Mammary epithelial cell (primary cell): ENCODE measurements at regions of chr13 and their contacts with region 1.

Region 1: GRCh38 chr13:36858290-36858689 is 39.3 kb downstream of the RFXAP start:
- DNase-seq: peak; percentile 25
- H3K4me3 ChIP-seq: no peak overlapping the region
- H3K27ac ChIP-seq: no peak overlapping the region
- H3K4me1 ChIP-seq: no peaks in the 10 kb centered on the region
- H3K27me3 ChIP-seq: no peaks in the 10 kb centered on the region
- CTCF ChIP-seq: peak; percentile 29 to 63

Region 2: GRCh38 chr13:35478271-35479037 is 1379.8 kb before region 1 on chr13:
- CTCF ChIA-PET with region 1: no interaction called
- dilution Hi-C with region 1: no loop called
- in situ Hi-C with region 1: no loop called
- intact Hi-C with region 1: no loop called
- DNase-seq: no peak
- H3K4me3 ChIP-seq: no peak overlapping the region
- H3K27ac ChIP-seq: no peak overlapping the region
- H3K4me1 ChIP-seq: no peaks in the 10 kb centered on the region
- H3K27me3 ChIP-seq: no peaks in the 10 kb centered on the region
- CTCF ChIP-seq: no peak

Region 3: GRCh38 chr13:36453516-36453915 is 404.8 kb before region 1 on chr13:
- CTCF ChIA-PET with region 1: no interaction called
- dilution Hi-C with region 1: no loop called
- in situ Hi-C with region 1: no loop called
- intact Hi-C with region 1: loop called (anchors 10 kb)
- DNase-seq: no peak
- H3K4me3 ChIP-seq: no peak overlapping the region
- H3K27ac ChIP-seq: no peak overlapping the region
- H3K4me1 ChIP-seq: peaks cover 11% of the 10 kb centered on the region
- H3K27me3 ChIP-seq: no peaks in the 10 kb centered on the region
- CTCF ChIP-seq: peak; percentile 14 to 48

Region 4: GRCh38 chr13:36965773-36966172 is 107.5 kb after region 1 on chr13:
- CTCF ChIA-PET with region 1: no interaction called
- dilution Hi-C with region 1: no loop called
- in situ Hi-C with region 1: no loop called
- intact Hi-C with region 1: loop called (anchors 5 kb)
- DNase-seq: peak; percentile 88
- H3K4me3 ChIP-seq: peak overlapping the region in 1 of 3 experiments; percentile 4
- H3K27ac ChIP-seq: peak overlapping the region; percentile 69
- H3K4me1 ChIP-seq: peaks cover 18% of the 10 kb centered on the region
- H3K27me3 ChIP-seq: no peaks in the 10 kb centered on the region
- CTCF ChIP-seq: no peak

Region 5: GRCh38 chr13:36981156-36981743 is 123.0 kb after region 1 on chr13:
- CTCF ChIA-PET with region 1: interaction called, 5 read pairs
- dilution Hi-C with region 1: no loop called
- in situ Hi-C with region 1: loop called in 1 of 2 experiments (anchors 10 kb)
- intact Hi-C with region 1: loop called (anchors 1 kb)
- DNase-seq: peak; percentile 11
- H3K4me3 ChIP-seq: no peak overlapping the region
- H3K27ac ChIP-seq: no peak overlapping the region
- H3K4me1 ChIP-seq: peaks cover 4% of the 10 kb centered on the region
- H3K27me3 ChIP-seq: no peaks in the 10 kb centered on the region
- CTCF ChIP-seq: peak; percentile 44 to 49

Region 6: DNA sequence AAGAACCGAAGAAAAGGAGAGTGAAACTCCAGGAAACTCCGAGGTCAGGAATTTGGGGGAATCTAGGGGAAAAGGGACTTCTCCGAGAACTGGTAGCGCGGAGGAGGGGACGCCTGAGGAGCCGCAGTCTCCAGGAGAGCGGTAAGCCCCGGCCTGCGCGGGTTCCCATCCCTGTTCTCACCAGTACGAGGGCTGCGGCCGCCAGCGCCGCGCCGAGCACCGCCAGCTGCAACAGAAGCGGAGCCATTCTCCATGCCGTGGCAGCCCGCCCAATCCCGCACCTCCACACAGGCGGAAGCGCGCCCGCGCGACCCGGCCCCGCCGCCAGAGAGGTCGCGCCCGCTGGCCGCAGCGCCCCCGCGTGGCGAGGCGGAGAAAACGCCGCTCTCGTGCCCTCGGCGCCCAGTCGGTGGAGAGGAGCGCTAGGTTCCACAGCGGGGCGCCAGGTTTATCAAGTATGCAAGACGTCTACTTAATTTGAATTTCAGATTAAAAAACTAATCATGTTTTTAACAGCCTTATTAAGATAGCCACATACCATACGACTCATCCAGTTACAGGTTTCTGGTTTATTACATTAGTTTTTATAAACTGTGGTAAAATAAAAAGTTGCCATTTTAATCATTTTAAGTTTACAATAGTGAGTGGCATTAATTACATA is 140.9 kb after region 1 on chr13 and contains the start of gene ALG5:
- CTCF ChIA-PET with region 1: no interaction called
- dilution Hi-C with region 1: no loop called
- in situ Hi-C with region 1: no loop called
- intact Hi-C with region 1: loop called (anchors 5 kb)
- DNase-seq: peak; percentile 83
- H3K4me3 ChIP-seq: peak within 1 kb of the TSS; percentile 76 to 93 (median 90)
- H3K27ac ChIP-seq: peak within 1 kb of the TSS; percentile 97
- H3K4me1 ChIP-seq: peaks cover 7% of the 10 kb centered on the region
- H3K27me3 ChIP-seq: no peaks in the 10 kb centered on the region
- CTCF ChIP-seq: peak; percentile 70 to 82
- total RNA-seq, gene ALG5: 27.7 to 37.5 TPM

Region 7: GRCh38 chr13:37068962-37069361 is 210.7 kb after region 1 on chr13:
- CTCF ChIA-PET with region 1: no interaction called
- dilution Hi-C with region 1: no loop called
- in situ Hi-C with region 1: no loop called
- intact Hi-C with region 1: loop called (anchors 2 kb)
- DNase-seq: no peak
- H3K4me3 ChIP-seq: no peak overlapping the region
- H3K27ac ChIP-seq: no peak overlapping the region
- H3K4me1 ChIP-seq: no peaks in the 10 kb centered on the region
- H3K27me3 ChIP-seq: no peaks in the 10 kb centered on the region
- CTCF ChIP-seq: peak; percentile 18 to 31

Region 8: DNA sequence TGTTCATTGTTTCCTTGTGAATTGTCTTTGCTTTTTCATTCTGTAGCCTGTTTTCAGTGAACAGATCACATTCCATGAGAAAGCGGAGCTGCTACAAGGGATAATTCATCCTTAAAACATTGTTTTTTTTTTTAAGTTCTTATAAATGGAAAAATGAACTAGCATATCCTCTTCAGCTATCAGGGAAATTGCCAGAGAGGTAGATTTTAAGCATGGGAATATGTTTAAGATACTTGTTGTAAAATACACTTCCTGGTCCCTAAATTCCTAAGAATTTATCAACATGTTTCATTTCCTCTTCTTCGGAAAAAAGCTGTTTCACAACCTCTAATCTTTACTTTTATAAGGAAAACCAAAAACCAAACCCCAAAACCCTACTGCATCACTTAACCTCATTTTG is 502.3 kb after region 1 on chr13:
- CTCF ChIA-PET with region 1: no interaction called
- dilution Hi-C with region 1: no loop called
- in situ Hi-C with region 1: no loop called
- intact Hi-C with region 1: no loop called
- DNase-seq: no peak
- H3K4me3 ChIP-seq: no peak overlapping the region
- H3K27ac ChIP-seq: no peak overlapping the region
- H3K4me1 ChIP-seq: peaks cover 12% of the 10 kb centered on the region
- H3K27me3 ChIP-seq: no peaks in the 10 kb centered on the region
- CTCF ChIP-seq: no peak